ENCODE measurements at regions of chr10 and their contacts with region 1.

Region 1: DNA sequence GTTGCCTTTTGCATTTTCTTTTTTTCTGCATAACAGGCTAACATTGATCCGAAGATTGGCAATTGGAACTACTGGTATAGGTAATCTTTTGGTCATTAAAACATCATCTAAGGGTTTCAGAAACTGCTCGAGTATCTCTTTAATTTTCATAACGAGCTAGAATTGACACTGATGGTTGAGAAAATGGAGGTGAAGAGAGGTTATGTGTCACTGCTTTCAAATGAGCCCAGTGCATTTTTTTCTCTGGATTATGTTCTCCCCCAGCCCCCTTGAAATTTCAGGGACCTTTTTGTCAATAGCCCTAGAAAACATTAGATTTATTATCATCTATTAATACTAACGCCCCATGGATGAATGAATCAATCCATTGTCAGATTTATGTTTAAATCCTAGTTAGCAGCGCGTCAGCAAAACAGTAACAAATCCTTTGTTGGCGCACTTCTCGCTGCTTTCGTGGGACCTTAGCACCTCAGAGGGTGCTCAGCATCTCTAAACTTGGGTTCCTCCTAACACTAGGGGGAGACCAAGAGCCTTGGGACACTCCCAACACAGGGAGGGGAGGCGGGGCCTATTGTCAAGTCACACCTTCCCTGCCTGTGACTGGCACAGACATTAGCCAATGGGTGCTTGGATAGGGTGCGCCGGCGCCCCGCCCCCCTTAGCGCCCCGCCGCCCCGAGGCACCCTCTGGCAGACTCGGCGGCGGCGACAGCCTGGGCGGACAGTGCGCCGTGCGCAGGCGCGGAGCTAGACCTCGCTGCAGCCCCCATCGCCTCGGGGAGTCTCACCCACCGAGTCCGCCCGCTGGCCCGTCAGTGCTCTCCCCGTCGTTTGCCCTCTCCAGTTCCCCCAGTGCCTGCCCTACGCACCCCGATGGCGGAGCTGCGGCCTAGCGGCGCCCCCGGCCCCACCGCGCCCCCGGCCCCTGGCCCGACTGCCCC is at the start of gene SUFU:
- DNase-seq: peak; percentile 97 to 98
- ATAC-seq: peak; percentile 93
- H3K4me3 ChIP-seq: peak within 1 kb of the TSS; percentile 75 to 86
- H3K27ac ChIP-seq: peak within 1 kb of the TSS in 1 of 2 donors; percentile 32
- H3K4me1 ChIP-seq: peaks cover 0 to 3% of the 10 kb centered on the region in 2 donors
- H3K27me3 ChIP-seq: no peaks in the 10 kb centered on the region
- total RNA-seq, gene SUFU: 11.3 to 24.0 TPM

Region 2: GRCh38 chr10:102432162-102432950 is 71.2 kb before region 1 on chr10 and contains the start of gene CUEDC2:
- intact Hi-C with region 1: loop called in 1 of 2 experiments (anchors 5 kb)
- DNase-seq: peak; percentile 98 to 99
- ATAC-seq: peak; percentile 96
- H3K4me3 ChIP-seq: peak within 1 kb of the TSS; percentile 58 to 73
- H3K27ac ChIP-seq: no peak within 1 kb of the TSS
- H3K4me1 ChIP-seq: peaks cover 0 to 4% of the 10 kb centered on the region in 2 donors
- H3K27me3 ChIP-seq: no peaks in the 10 kb centered on the region
- total RNA-seq, gene CUEDC2: 40.6 to 48.2 TPM

Region 3: GRCh38 chr10:102583435-102584417 is 80.2 kb after region 1 on chr10:
- intact Hi-C with region 1: loop called (anchors 1 to 2 kb)
- DNase-seq: peak; percentile 90 to 93
- ATAC-seq: peak; percentile 90
- H3K4me3 ChIP-seq: no peak overlapping the region
- H3K27ac ChIP-seq: no peak overlapping the region
- H3K4me1 ChIP-seq: no peaks in the 10 kb centered on the region
- H3K27me3 ChIP-seq: no peaks in the 10 kb centered on the region

Region 4: GRCh38 chr10:103429647-103430046 is 926.1 kb after region 1 on chr10:
- intact Hi-C with region 1: no loop called
- DNase-seq: no peak
- ATAC-seq: no peak
- H3K4me3 ChIP-seq: no peak overlapping the region
- H3K27ac ChIP-seq: no peak overlapping the region
- H3K4me1 ChIP-seq: no peaks in the 10 kb centered on the region
- H3K27me3 ChIP-seq: no peaks in the 10 kb centered on the region